Natural killer cell (primary cell): ENCODE measurements at regions of chr2 and their contacts with region 1.

Region 1: GRCh38 chr2:24490674-24491625 is at the start of gene NCOA1:
- DNase-seq: peak; percentile 82 to 94
- ATAC-seq: peak; percentile 71 to 87 (median 80)
- H3K4me3 ChIP-seq: peak within 1 kb of the TSS; percentile 67
- H3K4me3 Mint-ChIP-seq: peak within 1 kb of the TSS; percentile 97
- H3K27ac ChIP-seq: peak within 1 kb of the TSS; percentile 86
- H3K27ac Mint-ChIP-seq: peak within 1 kb of the TSS; percentile 89 to 99
- H3K4me1 ChIP-seq: peaks cover 20% of the 10 kb centered on the region
- H3K4me1 Mint-ChIP-seq: peaks cover 49 to 54% of the 10 kb centered on the region in 2 donors
- H3K27me3 ChIP-seq: no peaks in the 10 kb centered on the region
- H3K27me3 Mint-ChIP-seq: no peaks in the 10 kb centered on the region
- CTCF ChIP-seq: no peak
- total RNA-seq, gene NCOA1: 122 to 149 (median 124) TPM

Region 2: DNA sequence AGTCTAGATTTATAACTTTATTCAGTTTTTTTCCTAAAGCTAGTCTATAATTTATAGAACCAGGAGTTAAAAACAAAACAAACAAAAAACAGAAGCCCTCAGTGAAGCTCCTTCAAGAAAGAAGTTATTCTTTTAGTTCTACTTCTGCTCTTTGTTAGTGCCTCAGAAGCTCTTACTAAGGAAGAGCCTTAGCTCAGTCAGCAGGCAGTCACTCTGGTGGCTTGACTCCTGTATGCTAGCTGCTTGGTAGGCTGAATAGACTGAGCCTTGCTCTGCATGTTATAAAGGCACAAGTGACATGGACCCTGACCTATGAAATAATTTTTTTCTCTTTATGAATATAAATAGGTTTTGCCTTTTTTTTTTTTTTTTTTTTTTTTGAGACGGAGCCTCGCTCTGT is 24.9 kb after region 1 on chr2:
- intact Hi-C with region 1: loop called (anchors 2 kb)
- DNase-seq: peak in 1 of 2 donors; percentile 25
- ATAC-seq: peak; percentile 41 to 54 (median 49)
- H3K4me3 ChIP-seq: no peak overlapping the region
- H3K4me3 Mint-ChIP-seq: peak overlapping the region; percentile 17
- H3K27ac ChIP-seq: peak overlapping the region; percentile 48
- H3K27ac Mint-ChIP-seq: peak overlapping the region; percentile 74 to 88
- H3K4me1 ChIP-seq: peaks cover 11% of the 10 kb centered on the region
- H3K4me1 Mint-ChIP-seq: peaks cover 72 to 73% of the 10 kb centered on the region in 2 donors
- H3K27me3 ChIP-seq: no peaks in the 10 kb centered on the region
- H3K27me3 Mint-ChIP-seq: no peaks in the 10 kb centered on the region
- CTCF ChIP-seq: no peak

Region 3: GRCh38 chr2:24576617-24577016 is 85.7 kb after region 1 on chr2:
- intact Hi-C with region 1: no loop called
- DNase-seq: no peak
- ATAC-seq: peak in 1 of 3 donors; percentile 27
- H3K4me3 ChIP-seq: no peak overlapping the region
- H3K4me3 Mint-ChIP-seq: no peak overlapping the region
- H3K27ac ChIP-seq: no peak overlapping the region
- H3K27ac Mint-ChIP-seq: peak overlapping the region; percentile 68 to 78
- H3K4me1 ChIP-seq: peaks cover 3% of the 10 kb centered on the region
- H3K4me1 Mint-ChIP-seq: peaks cover 79 to 80% of the 10 kb centered on the region in 2 donors
- H3K27me3 ChIP-seq: no peaks in the 10 kb centered on the region
- H3K27me3 Mint-ChIP-seq: no peaks in the 10 kb centered on the region
- CTCF ChIP-seq: no peak

Region 4: DNA sequence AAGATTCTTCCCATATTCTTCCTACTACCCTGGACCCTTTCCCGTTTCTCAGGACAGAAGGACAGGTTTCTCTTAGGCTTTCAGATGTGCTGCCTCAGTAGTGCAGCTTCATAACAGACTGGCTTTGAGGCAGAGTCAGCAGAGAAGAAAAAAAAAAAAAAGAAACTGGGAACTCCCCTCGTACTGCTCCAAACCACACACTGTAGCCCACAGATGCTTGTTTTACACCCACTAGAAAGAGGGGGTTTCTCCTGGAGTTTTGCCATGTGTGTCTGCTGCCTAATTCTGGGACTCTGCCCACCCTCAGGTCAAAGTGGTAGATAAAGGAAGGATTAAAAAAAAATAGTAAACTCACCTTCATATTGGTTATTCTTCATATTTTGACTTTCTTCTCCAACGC is 96.0 kb after region 1 on chr2:
- intact Hi-C with region 1: loop called (anchors 5 kb)
- DNase-seq: peak; percentile 29 to 76
- ATAC-seq: peak; percentile 83 to 89 (median 86)
- H3K4me3 ChIP-seq: no peak overlapping the region
- H3K4me3 Mint-ChIP-seq: peak overlapping the region; percentile 68
- H3K27ac ChIP-seq: no peak overlapping the region
- H3K27ac Mint-ChIP-seq: peak overlapping the region; percentile 78 to 81
- H3K4me1 ChIP-seq: peaks cover 24% of the 10 kb centered on the region
- H3K4me1 Mint-ChIP-seq: peaks cover 66 to 69% of the 10 kb centered on the region in 2 donors
- H3K27me3 ChIP-seq: no peaks in the 10 kb centered on the region
- H3K27me3 Mint-ChIP-seq: no peaks in the 10 kb centered on the region
- CTCF ChIP-seq: no peak

Region 5: DNA sequence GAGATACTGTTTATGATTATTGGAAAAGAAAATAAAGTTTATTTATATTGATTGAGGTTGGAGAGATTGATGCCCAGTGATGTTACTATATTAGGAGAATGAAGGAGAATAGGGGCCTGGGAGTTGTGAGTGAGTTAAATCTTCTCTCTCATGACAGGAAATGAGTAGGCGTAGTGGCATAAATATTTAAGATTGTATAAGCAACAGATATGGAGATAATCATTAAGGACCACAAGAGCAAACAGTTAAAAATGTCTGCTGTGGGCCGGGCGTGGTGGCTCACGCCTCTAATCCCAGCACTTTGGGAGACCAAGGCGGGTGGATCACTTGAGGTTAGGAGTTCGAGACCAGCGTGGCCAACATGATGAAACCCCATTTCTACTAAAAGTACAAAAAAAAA is 239.5 kb after region 1 on chr2:
- intact Hi-C with region 1: loop called (anchors 10 kb)
- DNase-seq: no peak
- ATAC-seq: peak; percentile 37 to 66 (median 50)
- H3K4me3 ChIP-seq: no peak overlapping the region
- H3K4me3 Mint-ChIP-seq: peak overlapping the region; percentile 14
- H3K27ac ChIP-seq: no peak overlapping the region
- H3K27ac Mint-ChIP-seq: peak overlapping the region; percentile 85 to 86
- H3K4me1 ChIP-seq: peaks cover 5% of the 10 kb centered on the region
- H3K4me1 Mint-ChIP-seq: peaks cover 14 to 28% of the 10 kb centered on the region in 2 donors
- H3K27me3 ChIP-seq: no peaks in the 10 kb centered on the region
- H3K27me3 Mint-ChIP-seq: no peaks in the 10 kb centered on the region
- CTCF ChIP-seq: no peak